Upper lobe of right lung (tissue), 1 donor: ENCODE measurements at regions of chr1 and their contacts with region 1.

Region 1: GRCh38 chr1:119613769-119614720 is 34.0 kb downstream of the ZNF697 start:
- DNase-seq: peak; percentile 81
- ATAC-seq: peak; percentile 93
- H3K4me3 ChIP-seq: no peak overlapping the region
- H3K27ac ChIP-seq: no peak overlapping the region
- H3K4me1 ChIP-seq: no peaks in the 10 kb centered on the region
- H3K27me3 ChIP-seq: no peaks in the 10 kb centered on the region
- CTCF ChIP-seq: peak; percentile 74

Region 2: GRCh38 chr1:119662034-119662437 is 48.0 kb after region 1 on chr1:
- intact Hi-C with region 1: loop called (anchors 5 kb)
- DNase-seq: no peak
- ATAC-seq: no peak
- H3K4me3 ChIP-seq: no peak overlapping the region
- H3K27ac ChIP-seq: no peak overlapping the region
- H3K4me1 ChIP-seq: no peaks in the 10 kb centered on the region
- H3K27me3 ChIP-seq: no peaks in the 10 kb centered on the region
- CTCF ChIP-seq: no peak

Region 3: DNA sequence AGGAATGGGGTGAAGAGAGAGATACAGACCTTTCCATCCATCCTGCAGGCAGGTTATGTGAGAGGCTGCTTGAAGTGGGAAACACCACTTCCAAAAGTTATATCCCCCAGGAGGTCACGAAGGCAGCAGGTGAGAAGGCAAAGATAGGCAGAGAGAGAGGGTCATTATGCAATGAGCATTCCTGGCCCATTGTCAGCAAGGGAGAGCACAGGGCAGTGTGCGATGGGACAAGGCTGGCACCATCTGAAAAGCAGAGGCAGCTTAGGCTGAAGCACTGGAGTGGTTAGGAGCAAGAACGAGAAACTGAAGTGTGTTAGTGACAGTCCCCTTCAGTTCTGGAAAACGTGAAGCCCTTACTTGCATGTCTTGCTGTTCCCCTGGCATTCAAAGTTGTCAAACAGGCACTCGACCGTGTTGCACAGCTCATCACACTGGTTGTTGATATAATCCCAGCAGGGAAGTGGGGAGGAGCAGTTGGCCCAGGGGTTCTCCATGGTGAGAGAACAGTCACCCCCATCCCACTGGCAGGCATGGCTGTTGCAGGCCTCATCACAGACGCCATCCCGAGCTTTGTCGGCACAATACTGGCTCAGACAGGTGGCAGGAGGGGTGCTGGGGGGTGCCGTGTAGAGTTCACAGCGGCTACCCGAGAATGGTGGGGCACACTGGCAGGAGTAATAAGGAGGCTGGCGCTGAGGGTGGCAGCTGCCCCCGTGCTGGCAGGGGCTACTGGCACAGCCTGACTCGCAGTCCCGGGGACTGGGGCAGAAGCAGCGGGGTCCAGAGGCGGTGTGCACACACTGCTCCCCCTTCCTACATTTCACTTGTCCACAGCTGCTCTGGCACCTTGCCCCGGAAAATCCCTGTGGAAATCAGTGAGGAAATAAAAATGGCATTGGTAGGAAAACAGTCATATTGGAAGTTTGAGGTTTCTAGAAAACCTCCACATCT is 311.2 kb after region 1 on chr1:
- intact Hi-C with region 1: no loop called
- DNase-seq: no peak
- ATAC-seq: peak; percentile 21
- H3K4me3 ChIP-seq: no peak overlapping the region
- H3K27ac ChIP-seq: no peak overlapping the region
- H3K4me1 ChIP-seq: no peaks in the 10 kb centered on the region
- H3K27me3 ChIP-seq: no peaks in the 10 kb centered on the region
- CTCF ChIP-seq: no peak